ENCODE measurements at regions of chr1 and their contacts with region 1.

Region 1: DNA sequence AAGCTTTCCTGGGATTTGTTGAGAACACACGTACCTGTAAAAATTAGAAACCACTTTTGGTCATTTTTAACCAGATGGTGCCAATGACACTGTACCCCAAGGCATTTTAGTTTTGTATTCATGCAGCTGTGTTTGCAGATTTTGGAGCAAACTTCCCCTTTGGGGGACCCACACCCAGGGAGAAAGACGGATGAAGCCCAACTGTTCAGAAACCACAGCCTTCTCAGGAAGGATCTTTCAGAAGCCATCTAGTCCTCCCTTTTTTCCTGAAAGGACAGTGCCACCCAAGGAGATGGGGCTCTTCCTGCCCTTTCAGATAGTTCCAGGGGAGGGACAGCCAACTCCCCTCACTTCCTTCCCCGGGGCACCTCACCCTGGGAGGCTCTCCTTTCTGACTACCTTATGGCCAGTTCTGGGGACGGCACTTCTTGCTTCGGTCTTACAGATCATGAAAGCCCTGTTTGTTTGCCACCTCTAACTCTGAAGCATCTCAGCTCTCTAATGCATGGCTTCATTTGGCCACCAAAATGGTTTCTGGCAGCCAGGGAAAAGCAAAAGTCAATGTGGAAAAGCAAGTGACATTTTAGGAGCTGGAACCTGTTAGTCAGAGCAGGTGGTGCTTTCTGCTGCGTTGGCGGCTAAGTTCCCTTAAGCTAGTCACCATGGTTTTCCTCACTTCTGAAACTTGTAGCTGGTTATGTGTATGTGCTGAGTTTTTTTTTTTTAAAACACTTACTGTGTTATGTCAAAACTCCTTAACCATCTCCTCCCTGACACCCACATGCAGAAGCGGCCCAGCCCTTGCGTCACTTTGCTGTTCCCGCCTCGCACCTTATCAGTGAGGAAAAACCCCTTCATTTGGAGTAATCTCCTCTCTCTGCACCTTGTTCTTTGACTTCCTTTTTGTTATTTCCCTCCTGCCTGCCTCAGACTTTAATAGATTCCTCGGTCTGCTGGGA is 10.1 kb downstream of the TMCC2 start:
- DNase-seq: no peak
- ATAC-seq: peak in 3 of 4 donors; percentile 30 to 44 (median 42)
- H3K4me3 ChIP-seq: peak overlapping the region; percentile 23
- H3K27ac ChIP-seq: peak overlapping the region; percentile 79
- H3K4me1 ChIP-seq: peaks cover 92% of the 10 kb centered on the region
- H3K27me3 ChIP-seq: no peaks in the 10 kb centered on the region
- CTCF ChIP-seq: no peak

Region 2: DNA sequence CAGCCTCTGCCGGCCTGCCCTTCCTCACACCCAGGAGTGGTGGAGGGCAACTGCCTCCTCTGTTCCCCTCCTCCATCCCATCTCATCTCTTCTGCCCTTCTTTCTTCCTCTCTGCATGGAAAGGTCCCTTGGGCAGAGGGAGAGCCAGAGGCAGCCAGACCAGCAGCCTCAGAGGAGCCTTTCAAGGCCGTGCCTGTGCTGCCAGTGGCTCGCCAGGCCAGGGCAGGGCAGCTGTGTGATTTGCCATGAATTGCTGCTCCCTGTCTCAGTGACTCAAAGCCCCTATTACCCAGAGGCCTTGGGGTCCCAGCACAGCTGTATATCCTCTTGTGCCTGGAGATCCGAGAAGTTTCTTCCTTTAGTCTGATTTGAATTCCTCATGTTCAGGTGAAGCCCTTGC is 11.8 kb after region 1 on chr1:
- intact Hi-C with region 1: loop called in 1 of 2 experiments (anchors 2 kb)
- DNase-seq: no peak
- ATAC-seq: no peak
- H3K4me3 ChIP-seq: no peak overlapping the region
- H3K27ac ChIP-seq: peak overlapping the region; percentile 84
- H3K4me1 ChIP-seq: peaks cover 85% of the 10 kb centered on the region
- H3K27me3 ChIP-seq: no peaks in the 10 kb centered on the region
- CTCF ChIP-seq: no peak

Measured in psoas muscle (tissue), 8 donors.